ENCODE measurements at regions of chr20 and their contacts with region 1.

Region 1: GRCh38 chr20:48620519-48621254 is 207.1 kb downstream of the PREX1 start:
- DNase-seq: peak; percentile 84

Region 2: DNA sequence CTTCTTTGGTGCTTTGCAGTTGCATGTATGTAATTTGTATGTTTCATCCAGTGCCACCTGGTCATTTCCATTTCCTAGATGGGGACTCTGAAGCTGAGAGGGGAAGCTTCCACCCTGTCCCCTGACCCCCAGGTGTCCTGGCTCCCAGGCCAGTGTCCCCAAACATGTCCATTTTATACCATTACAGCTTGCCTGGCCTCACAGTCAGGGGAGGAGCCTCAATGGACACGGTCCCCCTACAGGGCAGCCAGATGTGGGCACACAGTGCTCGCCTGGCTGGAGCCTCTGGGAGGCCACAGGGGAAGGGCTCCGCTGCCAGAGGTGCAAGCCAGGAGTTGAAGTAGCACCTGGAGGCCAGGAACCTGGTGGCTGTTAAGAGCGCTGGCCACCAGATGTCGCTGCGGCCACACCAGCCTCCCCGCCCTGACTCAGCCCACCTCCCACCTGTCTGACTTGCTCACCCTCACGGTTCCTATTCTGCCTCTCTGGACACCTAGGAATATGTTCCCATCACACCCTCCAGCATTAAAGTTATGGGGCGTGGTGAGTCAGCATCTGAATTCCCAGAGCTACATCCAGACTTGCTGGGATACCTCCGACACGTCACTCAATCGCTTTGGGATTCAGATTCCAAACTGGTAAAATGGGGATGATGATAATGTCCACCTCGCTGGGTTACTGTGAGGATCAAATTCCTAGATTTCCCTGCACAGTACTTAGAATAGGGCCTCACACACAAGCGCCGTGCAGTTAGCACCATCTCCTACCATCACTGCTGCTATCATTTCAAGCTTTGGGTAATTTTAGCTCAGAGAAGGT is 942.8 kb before region 1 on chr20:
- in situ Hi-C with region 1: loop called (anchors 5 kb)
- DNase-seq: peak; percentile 62

Region 3: DNA sequence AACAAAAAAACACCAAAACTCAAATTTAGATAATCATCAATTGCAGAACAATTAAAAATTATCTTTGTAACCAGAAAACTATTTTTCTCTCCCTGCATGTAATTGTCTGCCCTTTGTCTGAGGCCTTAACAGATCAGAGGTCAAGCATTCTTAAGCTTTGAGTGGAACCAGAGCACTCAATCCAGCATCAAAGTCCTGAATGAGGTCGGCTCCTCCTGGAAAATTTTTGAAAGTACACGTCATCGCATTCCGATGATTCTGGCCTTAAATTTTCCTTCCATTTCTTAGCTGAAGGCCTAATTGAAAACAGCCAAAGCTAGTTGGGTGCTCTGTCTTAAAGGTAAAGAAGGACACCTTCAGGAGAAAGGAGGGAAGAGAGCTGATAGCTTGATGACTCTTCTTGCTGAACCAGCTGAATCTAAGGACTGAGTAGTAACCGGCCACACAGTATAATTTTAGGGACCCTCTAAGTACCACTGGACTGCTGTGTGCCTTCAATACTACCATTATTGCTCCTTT is 325.2 kb before region 1 on chr20:
- in situ Hi-C with region 1: loop called (anchors 10 kb)
- DNase-seq: peak; percentile 99

Measured in Caki2 (cell line).